ENCODE measurements at regions of chr5 and their contacts with region 1.

Region 1: DNA sequence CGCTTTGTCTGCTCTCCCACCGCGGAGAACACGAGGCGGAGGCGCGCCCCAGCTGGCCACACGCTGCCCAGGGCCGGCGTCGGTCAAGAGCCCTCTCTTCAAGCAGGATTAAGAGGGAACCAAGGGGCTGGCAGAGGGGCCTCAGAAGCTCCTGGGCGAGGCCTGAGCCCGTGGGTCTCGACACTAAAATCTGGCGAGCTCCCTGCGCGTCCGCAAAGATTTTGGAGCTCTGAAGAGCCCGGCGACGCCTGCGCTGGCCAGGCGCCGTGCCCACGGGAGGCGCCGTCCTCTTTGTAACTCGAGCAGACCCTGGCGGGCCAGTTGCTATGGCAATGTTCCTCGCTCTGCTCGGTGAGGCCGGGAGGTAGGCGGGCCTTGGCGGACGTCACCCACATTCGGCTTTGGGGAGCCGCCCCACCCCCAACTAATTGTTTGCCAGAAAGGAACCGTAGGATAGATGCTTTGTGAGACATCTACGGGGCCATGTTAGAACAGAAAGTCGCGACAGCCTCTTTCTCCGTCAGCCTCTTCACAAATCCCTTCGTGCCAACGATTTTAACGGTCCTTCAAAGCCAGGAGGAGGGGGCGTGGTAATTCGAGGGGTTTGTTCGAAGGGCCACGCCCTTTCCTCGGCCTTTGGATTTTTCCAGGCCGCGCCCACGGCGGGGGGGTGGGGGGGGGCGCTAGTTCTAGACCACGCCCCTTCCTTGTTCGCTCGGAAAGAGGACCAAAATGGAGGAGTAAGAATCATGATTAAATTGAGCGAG is 714 bp upstream of the CNOT8 start:
- DNase-seq: peak; percentile 96
- H3K4me3 Mint-ChIP-seq: peak overlapping the region; percentile 100
- H3K27ac Mint-ChIP-seq: peak overlapping the region; percentile 98
- H3K4me1 Mint-ChIP-seq: peaks cover 29% of the 10 kb centered on the region
- H3K27me3 Mint-ChIP-seq: no peaks in the 10 kb centered on the region

Region 2: GRCh38 chr5:154038707-154039457 is 818.8 kb before region 1 on chr5 and contains the starts of genes FAM114A2 and MFAP3:
- intact Hi-C with region 1: loop called (anchors 5 kb)
- DNase-seq: peak; percentile 97
- H3K4me3 Mint-ChIP-seq: peak within 1 kb of the TSS; percentile 96
- H3K27ac Mint-ChIP-seq: peak within 1 kb of the TSS; percentile 96
- H3K4me1 Mint-ChIP-seq: peaks cover 31% of the 10 kb centered on the region
- H3K27me3 Mint-ChIP-seq: no peaks in the 10 kb centered on the region
- total RNA-seq, gene FAM114A2: 23.6 and 27.3 TPM in 2 replicates
- total RNA-seq, gene MFAP3: 23.1 and 26.4 TPM in 2 replicates

Region 3: GRCh38 chr5:154189819-154190594 is 667.7 kb before region 1 on chr5:
- intact Hi-C with region 1: loop called (anchors 10 kb)
- DNase-seq: peak; percentile 95
- H3K4me3 Mint-ChIP-seq: peak overlapping the region; percentile 89
- H3K27ac Mint-ChIP-seq: peak overlapping the region; percentile 77
- H3K4me1 Mint-ChIP-seq: peaks cover 41% of the 10 kb centered on the region
- H3K27me3 Mint-ChIP-seq: peaks cover 5% of the 10 kb centered on the region

Region 4: GRCh38 chr5:154654486-154655371 is 203.0 kb before region 1 on chr5:
- intact Hi-C with region 1: loop called (anchors 5 kb)
- DNase-seq: no peak
- H3K4me3 Mint-ChIP-seq: no peak overlapping the region
- H3K27ac Mint-ChIP-seq: no peak overlapping the region
- H3K4me1 Mint-ChIP-seq: peaks cover 5% of the 10 kb centered on the region
- H3K27me3 Mint-ChIP-seq: peaks cover 2% of the 10 kb centered on the region

Region 5: GRCh38 chr5:154940772-154941620 is 83.3 kb after region 1 on chr5 and contains the start of gene MRPL22:
- intact Hi-C with region 1: loop called (anchors 1 kb)
- DNase-seq: peak; percentile 99
- H3K4me3 Mint-ChIP-seq: peak within 1 kb of the TSS; percentile 98
- H3K27ac Mint-ChIP-seq: peak within 1 kb of the TSS; percentile 94
- H3K4me1 Mint-ChIP-seq: peaks cover 24% of the 10 kb centered on the region
- H3K27me3 Mint-ChIP-seq: no peaks in the 10 kb centered on the region
- total RNA-seq, gene MRPL22: 83.8 and 89.6 TPM in 2 replicates

Measured in activated CD4-positive, alpha-beta T cell treated with anti-CD3 and anti-CD28 coated beads, Interleukin-2, amount 10 ng/mL, durations not matched to agents 24 days and 14 days (primary cell).